ENCODE measurements at regions of chr2 and their contacts with region 1.

Region 1: DNA sequence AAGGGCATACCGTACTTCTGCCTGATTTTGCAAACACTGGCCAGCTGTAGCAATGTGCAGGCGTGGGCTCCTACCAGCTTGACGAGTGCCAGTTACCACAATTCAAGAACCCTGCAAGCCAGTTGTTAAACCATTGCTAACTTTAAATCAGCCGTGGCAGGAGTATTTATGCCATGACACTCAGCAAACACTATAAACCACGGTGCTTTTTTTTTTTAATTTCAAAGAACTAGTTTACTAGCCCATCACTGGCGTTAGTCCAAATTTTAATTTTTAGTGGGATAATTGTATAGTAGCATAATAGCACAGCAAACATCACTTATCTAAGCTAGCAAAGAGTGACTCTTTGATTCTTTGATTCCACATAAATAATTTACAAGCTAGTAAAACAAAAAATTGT is 111.1 kb downstream of the COL4A4 start:
- DNase-seq: no peak
- H3K4me3 ChIP-seq: no peak overlapping the region
- H3K27me3 ChIP-seq: no peaks in the 10 kb centered on the region
- CTCF ChIP-seq: no peak

Region 2: GRCh38 chr2:227033471-227034148 is 19.3 kb before region 1 on chr2:
- CTCF ChIA-PET with region 1: interaction called, 10 read pairs
- POLR2A ChIA-PET with region 1: no interaction called
- DNase-seq: no peak
- H3K4me3 ChIP-seq: no peak overlapping the region
- H3K27me3 ChIP-seq: no peaks in the 10 kb centered on the region
- CTCF ChIP-seq: peak; percentile 84

Measured in BJ (cell line).